ENCODE measurements at regions of chr17 and their contacts with region 1.

Region 1: DNA sequence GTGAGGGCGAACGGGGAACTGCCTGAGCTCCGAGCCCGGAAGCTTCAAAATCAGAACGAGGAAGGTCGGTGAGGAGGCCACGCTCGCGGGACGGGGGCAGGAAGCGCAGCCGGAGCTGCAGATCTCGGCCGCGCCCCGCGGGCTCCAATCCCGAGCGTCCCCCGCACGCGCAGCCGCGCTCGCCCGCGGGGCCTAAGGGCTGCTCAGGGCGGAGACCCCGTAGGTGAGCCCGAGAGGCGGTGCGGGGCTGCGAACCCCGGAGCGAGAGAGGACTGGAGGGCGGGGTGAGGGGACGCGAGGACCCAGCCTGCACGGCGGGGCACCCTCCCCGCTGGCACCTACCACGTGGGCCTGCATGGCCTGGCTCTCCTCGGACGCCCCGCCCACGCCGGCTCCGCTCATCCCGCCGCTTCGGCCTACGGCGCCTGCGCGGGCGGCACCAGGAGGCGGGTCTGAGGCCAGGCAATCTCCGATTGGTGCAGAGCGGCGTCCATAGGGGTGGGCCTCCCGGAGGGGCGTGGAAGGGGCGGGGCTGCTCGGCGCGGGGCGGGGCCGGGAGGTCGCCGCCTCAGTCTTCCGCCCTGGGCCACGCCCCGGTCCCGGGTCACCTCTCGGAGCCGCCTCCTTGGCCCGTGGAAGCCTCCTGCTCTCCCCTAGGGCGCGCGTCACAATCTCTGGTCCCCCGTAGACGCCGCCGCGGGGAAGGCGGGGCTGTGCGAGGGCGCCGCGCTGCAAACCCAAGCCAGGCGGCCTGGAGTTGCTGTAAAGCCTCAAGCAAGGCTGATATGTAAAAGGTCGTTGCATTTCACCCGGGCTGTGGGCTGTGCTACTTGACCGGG is 27.8 kb upstream of the METRNL start:
- DNase-seq: peak; percentile 95
- H3K4me3 ChIP-seq: peak overlapping the region; percentile 59 to 79 (median 71)
- H3K27ac ChIP-seq: peak overlapping the region; percentile 29
- H3K4me1 ChIP-seq: peaks cover 26% of the 10 kb centered on the region
- H3K27me3 ChIP-seq: no peaks in the 10 kb centered on the region
- CTCF ChIP-seq: peak in 1 of 2 donors; percentile 12

Region 2: GRCh38 chr17:82985973-82986372 is 65.6 kb before region 1 on chr17:
- CTCF ChIA-PET with region 1: no interaction called
- dilution Hi-C with region 1: no loop called
- in situ Hi-C with region 1: no loop called
- intact Hi-C with region 1: loop called (anchors 5 kb)
- DNase-seq: peak; percentile 70
- H3K4me3 ChIP-seq: no peak overlapping the region
- H3K27ac ChIP-seq: no peak overlapping the region
- H3K4me1 ChIP-seq: peaks cover 8% of the 10 kb centered on the region
- H3K27me3 ChIP-seq: no peaks in the 10 kb centered on the region
- CTCF ChIP-seq: no peak

Region 3: DNA sequence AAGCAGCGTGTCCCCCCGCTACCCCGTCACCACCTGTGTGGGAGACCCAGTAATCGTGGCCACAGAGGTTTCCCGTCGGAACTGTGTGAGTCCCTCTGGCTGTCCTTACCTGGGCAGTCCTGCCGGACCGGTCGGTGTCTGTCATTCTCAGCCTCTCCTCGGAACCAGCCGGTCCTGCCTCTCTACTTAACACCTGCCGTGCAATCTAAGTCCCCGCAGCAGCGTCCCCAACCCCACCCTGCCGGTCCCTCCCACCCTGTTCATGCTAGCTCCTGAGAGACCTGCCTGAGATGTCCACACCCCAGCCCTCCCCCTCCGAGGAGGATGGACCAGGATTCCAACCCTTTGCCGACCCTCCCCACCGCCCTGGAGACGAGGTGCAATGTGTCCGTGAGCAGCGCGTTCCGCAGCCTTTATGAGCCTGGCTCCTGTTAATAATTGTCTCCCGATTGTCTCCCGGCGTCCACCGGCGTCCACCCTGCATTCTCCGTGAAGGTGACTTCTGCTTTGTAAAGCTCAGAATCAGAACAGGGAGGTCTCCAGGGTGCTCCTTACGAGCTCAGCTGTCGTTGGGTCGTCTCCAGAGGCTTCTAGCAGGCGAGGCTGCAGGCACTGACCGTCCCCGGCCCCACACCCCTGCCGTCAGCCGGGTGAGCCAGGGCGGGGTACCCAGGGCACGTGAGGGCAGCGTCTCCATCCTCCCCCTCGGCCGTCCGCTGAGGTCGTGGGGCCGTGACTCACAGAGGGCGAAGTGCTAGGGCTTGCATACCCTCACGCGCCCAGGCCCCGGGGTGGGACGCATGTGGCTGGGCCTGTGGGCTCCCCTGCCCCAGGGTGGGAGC is 37.9 kb after region 1 on chr17:
- CTCF ChIA-PET with region 1: no interaction called
- dilution Hi-C with region 1: no loop called
- in situ Hi-C with region 1: no loop called
- intact Hi-C with region 1: no loop called
- DNase-seq: no peak
- H3K4me3 ChIP-seq: no peak overlapping the region
- H3K27ac ChIP-seq: no peak overlapping the region
- H3K4me1 ChIP-seq: peaks cover 6% of the 10 kb centered on the region
- H3K27me3 ChIP-seq: no peaks in the 10 kb centered on the region
- CTCF ChIP-seq: no peak

Region 4: DNA sequence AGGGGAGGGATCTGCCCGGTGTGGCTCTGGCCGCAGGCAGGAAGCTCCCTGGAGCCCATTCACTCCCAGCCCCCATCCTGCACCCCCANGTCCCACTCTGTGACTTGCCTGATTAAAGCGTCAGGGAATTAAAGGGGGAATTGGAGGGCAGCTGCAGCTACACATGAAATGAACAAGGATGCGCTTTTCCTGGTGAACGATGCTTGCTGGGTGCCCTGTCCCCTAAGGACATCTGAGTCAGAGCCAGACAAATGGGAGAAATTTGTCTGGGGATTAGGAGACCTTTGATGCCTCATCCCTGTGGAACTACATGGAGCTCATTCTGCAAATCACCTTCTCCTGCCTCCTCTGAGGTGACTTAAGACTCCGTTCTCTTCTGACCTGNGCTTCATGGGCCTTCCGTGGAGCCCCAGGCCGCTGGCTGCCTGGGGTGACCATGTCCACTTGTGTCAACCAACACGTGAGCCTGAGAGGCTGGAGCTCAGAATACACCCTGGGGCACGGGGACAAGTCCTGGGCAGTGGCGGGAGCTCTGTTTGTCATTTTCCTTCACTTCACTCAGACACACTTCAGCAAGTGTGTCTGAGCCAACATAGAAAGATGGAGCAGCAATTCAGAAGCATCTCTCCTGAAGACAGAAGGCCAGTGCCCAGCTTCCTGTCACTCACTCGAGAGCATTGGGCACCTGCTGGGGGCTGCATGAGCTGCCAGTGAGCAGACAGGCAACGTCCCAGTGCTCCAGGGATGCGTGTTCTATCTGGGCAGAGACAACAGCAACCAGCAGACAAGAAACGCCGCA is 81.9 kb after region 1 on chr17:
- CTCF ChIA-PET with region 1: no interaction called
- dilution Hi-C with region 1: loop called (anchors 5 kb)
- in situ Hi-C with region 1: no loop called
- intact Hi-C with region 1: no loop called
- DNase-seq: no peak
- H3K4me3 ChIP-seq: no peak overlapping the region
- H3K27ac ChIP-seq: no peak overlapping the region
- H3K4me1 ChIP-seq: no peaks in the 10 kb centered on the region
- H3K27me3 ChIP-seq: peaks cover 6% of the 10 kb centered on the region
- CTCF ChIP-seq: no peak

Measured in mammary epithelial cell (primary cell).